Sigmoid colon (tissue), 7 donors: ENCODE measurements at regions of chr5 and their contacts with region 1.

Region 1: GRCh38 chr5:88729084-88729828 is 153.7 kb downstream of the MEF2C start:
- DNase-seq: peak; percentile 83
- H3K4me3 ChIP-seq: no peak overlapping the region
- H3K27ac ChIP-seq: no peak overlapping the region
- H3K4me1 ChIP-seq: peaks cover 0 to 14% (median 6%) of the 10 kb centered on the region in 4 donors
- H3K27me3 ChIP-seq: no peaks in the 10 kb centered on the region
- CTCF ChIP-seq: peak; percentile 41 to 77 (median 60)
- EP300 ChIP-seq: no peak
- POLR2A ChIP-seq: no peak

Region 2: GRCh38 chr5:88805151-88805784 is 76.0 kb after region 1 on chr5:
- intact Hi-C with region 1: no loop called
- DNase-seq: no peak
- H3K4me3 ChIP-seq: no peak overlapping the region
- H3K27ac ChIP-seq: no peak overlapping the region
- H3K4me1 ChIP-seq: no peaks in the 10 kb centered on the region
- H3K27me3 ChIP-seq: no peaks in the 10 kb centered on the region
- CTCF ChIP-seq: no peak
- EP300 ChIP-seq: no peak
- POLR2A ChIP-seq: no peak

Region 3: DNA sequence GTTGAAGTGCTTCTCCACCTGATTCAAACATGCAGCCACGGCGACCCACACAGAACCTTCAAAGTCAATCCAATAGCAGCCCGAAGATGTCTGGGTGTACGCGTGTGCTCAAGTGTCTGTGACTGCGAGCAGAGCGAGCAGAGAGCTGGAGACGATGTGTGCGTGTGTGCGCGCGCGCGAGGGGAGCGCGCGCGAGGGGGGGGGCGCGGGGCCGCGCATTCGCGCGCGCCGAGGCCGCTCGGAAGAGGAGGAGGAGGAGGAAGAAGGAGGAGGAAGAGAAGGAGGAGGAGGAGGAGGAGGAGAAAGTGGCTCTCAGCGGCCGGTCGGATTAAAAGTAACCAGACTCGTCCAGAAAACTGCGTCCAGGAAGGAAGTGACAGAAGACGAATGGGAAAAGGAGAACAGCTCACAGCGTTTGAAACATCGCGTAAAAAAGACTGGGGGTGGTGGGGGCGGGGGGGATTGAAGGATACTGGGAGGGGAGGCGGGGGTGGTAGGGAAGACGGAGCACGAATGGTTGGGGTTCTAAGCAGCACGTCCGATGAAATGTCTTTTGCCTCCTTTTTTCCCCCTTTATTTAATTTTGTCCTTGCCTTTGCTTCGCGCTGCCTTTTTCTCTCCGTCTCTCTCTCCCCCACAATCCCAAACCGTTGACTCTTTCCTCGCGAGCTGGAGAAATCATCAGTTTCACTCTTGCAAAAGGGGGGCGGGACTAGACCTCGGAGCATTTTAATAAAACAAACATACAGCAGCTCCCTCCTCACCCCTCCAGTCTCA is 154.0 kb after region 1 on chr5 and contains the start of gene MEF2C:
- intact Hi-C with region 1: loop called (anchors 2 kb)
- DNase-seq: peak; percentile 88
- H3K4me3 ChIP-seq: peak within 1 kb of the TSS; percentile 57 to 65 (median 60)
- H3K27ac ChIP-seq: peak within 1 kb of the TSS; percentile 87 to 93 (median 88)
- H3K4me1 ChIP-seq: peaks cover 0 to 67% (median 43%) of the 10 kb centered on the region in 4 donors
- H3K27me3 ChIP-seq: no peaks in the 10 kb centered on the region
- CTCF ChIP-seq: no peak
- EP300 ChIP-seq: no peak
- POLR2A ChIP-seq: peak; percentile 38 to 80
- total RNA-seq, gene MEF2C: 32.1 to 51.4 (median 40.2) TPM

Region 4: GRCh38 chr5:88940713-88941112 is 211.5 kb after region 1 on chr5:
- intact Hi-C with region 1: loop called (anchors 10 kb)
- DNase-seq: no peak
- H3K4me3 ChIP-seq: no peak overlapping the region
- H3K27ac ChIP-seq: peak overlapping the region in 3 of 4 donors; percentile 28 to 81 (median 76)
- H3K4me1 ChIP-seq: peaks cover 0 to 36% (median 24%) of the 10 kb centered on the region in 4 donors
- H3K27me3 ChIP-seq: no peaks in the 10 kb centered on the region
- CTCF ChIP-seq: no peak
- EP300 ChIP-seq: no peak
- POLR2A ChIP-seq: no peak

Region 5: DNA sequence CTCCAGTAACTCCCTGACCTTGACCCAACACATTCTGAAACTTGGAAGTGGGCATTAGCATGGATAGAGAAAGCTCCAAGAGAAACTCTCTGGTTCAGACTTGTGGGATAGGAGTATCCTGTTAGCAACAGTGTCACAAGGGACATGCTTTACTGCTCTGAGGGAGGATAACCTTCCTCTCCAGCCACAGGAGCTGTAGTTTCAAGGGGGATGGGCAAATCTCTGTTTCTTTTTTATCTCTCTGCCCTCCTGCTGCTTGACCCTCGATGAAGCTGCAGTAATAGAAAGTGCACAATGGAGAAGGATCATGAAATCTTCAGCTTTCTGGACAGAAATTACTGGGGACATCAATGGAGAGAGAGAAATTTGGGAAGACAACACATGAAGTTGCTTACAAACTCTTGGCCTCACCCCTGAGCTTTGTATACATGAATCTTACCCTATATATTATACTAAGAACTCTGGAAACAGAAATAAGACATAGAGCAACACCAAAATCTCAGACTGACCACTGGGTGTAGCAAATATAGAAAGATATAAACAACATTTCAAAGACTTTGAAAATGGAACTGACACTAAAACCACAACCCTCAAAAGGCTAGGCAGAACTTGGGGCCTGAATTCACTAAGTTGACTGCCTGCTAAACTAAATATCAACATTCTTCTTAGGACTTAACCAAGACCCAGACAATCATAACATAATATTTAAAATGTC is 624.7 kb after region 1 on chr5:
- intact Hi-C with region 1: no loop called
- DNase-seq: no peak
- H3K4me3 ChIP-seq: no peak overlapping the region
- H3K27ac ChIP-seq: no peak overlapping the region
- H3K4me1 ChIP-seq: no peaks in the 10 kb centered on the region
- H3K27me3 ChIP-seq: no peaks in the 10 kb centered on the region
- CTCF ChIP-seq: no peak
- EP300 ChIP-seq: no peak
- POLR2A ChIP-seq: no peak

Region 6: DNA sequence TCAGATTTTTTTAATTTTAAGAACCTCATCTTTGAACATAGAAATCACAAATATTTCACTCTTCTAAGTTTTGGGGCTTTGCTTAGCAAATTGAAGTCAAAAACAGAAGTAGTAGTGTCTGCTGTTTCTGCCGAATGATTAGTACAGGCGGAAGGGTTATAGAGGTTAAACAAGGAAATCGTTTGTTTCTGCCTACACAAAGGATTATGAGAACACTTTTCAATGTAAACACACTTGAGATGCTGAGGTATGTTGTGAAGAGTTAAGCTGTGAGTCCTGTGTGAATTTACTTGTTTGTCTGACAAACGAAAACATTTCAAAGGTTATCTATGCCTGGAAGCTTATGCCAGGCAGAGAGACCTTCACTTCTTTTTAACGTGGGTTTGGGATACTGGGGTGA is 1455.5 kb after region 1 on chr5:
- intact Hi-C with region 1: loop called (anchors 5 kb)
- DNase-seq: no peak
- H3K4me3 ChIP-seq: no peak overlapping the region
- H3K27ac ChIP-seq: no peak overlapping the region
- H3K4me1 ChIP-seq: peaks cover 0 to 14% (median 5%) of the 10 kb centered on the region in 4 donors
- H3K27me3 ChIP-seq: no peaks in the 10 kb centered on the region
- CTCF ChIP-seq: no peak
- EP300 ChIP-seq: no peak
- POLR2A ChIP-seq: no peak

Region 7: GRCh38 chr5:90264689-90265544 is 1535.7 kb after region 1 on chr5:
- intact Hi-C with region 1: loop called (anchors 2 kb)
- DNase-seq: peak; percentile 65
- H3K4me3 ChIP-seq: no peak overlapping the region
- H3K27ac ChIP-seq: no peak overlapping the region
- H3K4me1 ChIP-seq: peaks cover 0 to 6% (median 3%) of the 10 kb centered on the region in 4 donors
- H3K27me3 ChIP-seq: no peaks in the 10 kb centered on the region
- CTCF ChIP-seq: peak in 3 of 4 experiments; percentile 69 to 89 (median 70)
- EP300 ChIP-seq: no peak
- POLR2A ChIP-seq: no peak